Activated T-helper 2 cell treated with anti-CD3 and anti-CD28 coated beads, Interferon-gamma antibody, Interleukin-2, Interleukin-4, amounts not matched to agents 10 μg/mL and 5 μg/mL and 100 μg/mL, durations not matched to agents 14 hours and 24 hours and 36 hours (primary cell): ENCODE measurements at regions of chr17 and their contacts with region 1.

Region 1: DNA sequence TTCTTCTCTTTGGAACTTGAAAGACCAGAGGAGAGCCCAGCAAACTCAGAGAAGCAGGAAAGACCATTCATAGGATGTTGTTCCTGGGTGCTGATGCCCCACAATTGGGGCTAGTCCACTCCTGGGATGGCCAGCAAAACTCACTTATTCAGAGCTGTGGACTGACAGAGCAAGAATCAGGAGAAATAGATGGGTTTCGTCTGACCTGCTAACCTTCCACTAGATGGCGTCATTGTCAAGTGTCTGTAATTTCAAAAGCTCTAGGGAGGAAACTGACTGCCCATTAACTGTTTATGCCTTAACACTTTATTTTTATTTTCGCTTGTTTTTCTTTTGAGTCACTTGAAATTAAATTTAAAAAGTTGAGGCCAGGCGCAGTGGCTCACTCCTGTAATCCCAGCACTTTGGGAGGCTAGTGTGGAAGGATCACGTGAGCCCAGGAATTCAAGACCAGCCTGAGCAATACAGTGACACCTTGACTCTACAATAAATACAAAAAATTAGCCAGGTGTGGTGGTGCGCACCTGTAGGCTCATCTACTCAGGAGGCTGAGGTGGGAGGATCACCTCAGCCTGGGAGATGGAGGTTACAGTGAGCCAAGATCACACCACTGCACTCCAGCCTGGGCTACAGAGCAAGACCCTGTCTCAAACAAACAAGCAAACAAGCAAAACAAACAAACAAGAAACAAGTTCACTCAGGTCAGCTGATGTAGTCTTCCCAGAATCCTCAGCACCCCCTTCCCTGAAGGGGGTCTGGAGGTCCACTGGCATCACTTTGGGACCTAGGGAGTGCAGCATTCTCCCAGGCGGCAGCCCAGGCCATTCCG is 28.6 kb upstream of the MILR1 start:
- DNase-seq: no peak
- H3K4me3 Mint-ChIP-seq: no peak overlapping the region
- H3K27ac Mint-ChIP-seq: no peak overlapping the region
- H3K4me1 Mint-ChIP-seq: peaks cover 2% of the 10 kb centered on the region
- H3K27me3 Mint-ChIP-seq: peaks cover 8% of the 10 kb centered on the region

Region 2: DNA sequence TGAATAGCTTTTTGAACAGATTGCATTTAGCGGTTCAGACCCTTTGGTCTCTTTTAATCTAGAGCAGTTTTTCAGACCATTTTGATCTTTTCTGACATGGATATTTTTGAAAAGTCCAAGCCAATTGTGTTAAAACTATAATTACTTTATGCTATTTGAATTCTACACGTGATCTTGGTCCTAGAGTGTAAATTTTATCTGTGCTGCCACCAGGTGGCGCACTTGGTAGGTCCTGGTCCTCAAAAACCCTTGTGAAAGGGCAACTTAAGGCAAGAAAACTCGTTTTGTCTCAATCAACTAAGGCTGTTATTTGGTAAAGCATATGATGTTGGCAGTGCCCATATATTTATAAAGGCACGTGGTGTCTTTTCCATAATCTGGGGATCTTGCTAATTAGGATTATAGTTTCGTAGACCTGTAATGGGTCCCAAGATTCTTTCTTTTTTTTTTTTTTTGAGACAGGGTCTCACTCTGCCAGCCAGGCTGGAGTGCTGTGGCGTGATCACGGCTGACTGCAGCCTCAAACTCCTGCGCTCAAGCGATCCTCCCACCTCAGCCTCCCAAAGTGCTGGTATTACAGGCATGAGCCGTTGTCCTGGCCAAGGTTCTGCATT is 113.4 kb before region 1 on chr17:
- intact Hi-C with region 1: loop called (anchors 1 kb)
- DNase-seq: peak; percentile 43
- H3K4me3 Mint-ChIP-seq: no peak overlapping the region
- H3K27ac Mint-ChIP-seq: no peak overlapping the region
- H3K4me1 Mint-ChIP-seq: peaks cover 2% of the 10 kb centered on the region
- H3K27me3 Mint-ChIP-seq: no peaks in the 10 kb centered on the region

Region 3: DNA sequence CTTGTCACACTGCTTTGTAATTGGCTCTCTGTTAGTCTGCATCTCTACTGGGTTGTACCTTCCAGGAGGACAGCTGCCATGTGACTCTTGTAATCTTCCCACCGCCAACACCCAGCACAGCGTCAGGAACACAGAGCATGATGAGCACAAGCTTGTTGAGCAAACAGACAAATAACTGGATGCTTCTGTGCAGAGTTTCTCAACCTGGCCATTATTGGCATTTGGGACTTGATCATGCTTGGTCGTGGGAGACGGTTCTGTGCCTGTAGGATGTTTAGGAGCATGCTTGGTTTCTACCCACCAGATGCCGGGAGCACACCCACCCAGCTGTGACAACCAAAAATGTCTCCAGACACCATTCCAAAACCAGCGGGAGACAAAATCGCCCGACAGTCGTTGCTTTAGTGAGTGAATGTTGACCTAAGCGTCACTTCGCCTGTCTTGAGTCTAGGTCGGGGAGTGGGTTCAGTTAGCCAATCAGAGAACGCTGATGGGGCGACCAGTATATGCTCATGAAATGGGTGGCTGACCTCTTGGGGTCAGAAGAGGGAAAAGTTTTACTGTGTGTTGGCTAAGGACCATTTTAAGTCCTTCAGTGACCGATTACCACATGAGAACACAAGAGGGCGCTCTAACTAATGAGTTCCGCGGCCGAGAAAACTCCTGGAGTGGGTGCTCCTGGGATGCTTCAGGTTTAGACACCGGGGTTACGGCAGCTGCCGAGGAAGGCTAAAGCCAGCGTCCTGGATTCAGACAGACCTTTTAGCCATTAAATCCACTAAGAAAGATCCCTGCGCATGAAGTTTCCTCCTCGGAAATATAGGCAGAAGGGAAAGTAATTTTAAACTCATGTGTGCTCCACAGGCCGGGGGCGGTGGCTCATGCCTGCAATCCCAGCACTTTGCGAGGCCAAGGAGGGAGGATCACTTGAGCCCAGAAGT is 99.5 kb before region 1 on chr17:
- intact Hi-C with region 1: loop called (anchors 1 kb)
- DNase-seq: peak; percentile 39
- H3K4me3 Mint-ChIP-seq: peak overlapping the region; percentile 47
- H3K27ac Mint-ChIP-seq: no peak overlapping the region
- H3K4me1 Mint-ChIP-seq: peaks cover 4% of the 10 kb centered on the region
- H3K27me3 Mint-ChIP-seq: peaks cover 8% of the 10 kb centered on the region

Region 4: DNA sequence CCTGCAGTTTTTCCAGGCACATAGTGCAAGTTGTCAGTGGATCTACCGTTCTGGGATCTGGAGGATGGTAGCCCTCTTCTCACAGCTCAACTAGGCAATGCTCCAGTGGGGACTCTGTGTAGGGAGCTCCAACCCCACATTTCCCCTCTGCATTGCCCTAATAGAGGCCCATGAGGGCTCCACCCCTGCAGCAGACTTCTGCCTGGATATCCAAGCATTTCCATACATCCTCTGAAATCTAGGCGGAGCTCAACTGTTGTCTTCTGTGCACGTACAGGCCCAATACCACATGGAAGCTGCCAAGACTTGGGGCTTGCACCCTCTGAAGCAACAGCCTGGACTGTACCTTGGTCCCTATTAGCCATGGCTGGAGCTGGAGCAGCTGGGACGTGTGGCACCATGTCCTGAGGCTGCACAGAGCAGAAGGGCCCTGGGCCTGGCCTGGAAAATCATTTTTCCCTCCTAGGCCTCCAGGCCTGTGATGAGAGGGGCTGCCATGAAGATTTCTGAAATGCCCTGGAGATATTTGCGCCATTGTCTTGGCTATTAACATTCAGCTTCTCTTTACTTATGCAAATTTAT is 17.7 kb after region 1 on chr17:
- intact Hi-C with region 1: no loop called
- DNase-seq: no peak
- H3K4me3 Mint-ChIP-seq: no peak overlapping the region
- H3K27ac Mint-ChIP-seq: no peak overlapping the region
- H3K4me1 Mint-ChIP-seq: peaks cover 16% of the 10 kb centered on the region
- H3K27me3 Mint-ChIP-seq: no peaks in the 10 kb centered on the region

Region 5: GRCh38 chr17:64491034-64491859 is 70.9 kb after region 1 on chr17:
- intact Hi-C with region 1: loop called (anchors 1 kb)
- DNase-seq: peak; percentile 47
- H3K4me3 Mint-ChIP-seq: no peak overlapping the region
- H3K27ac Mint-ChIP-seq: no peak overlapping the region
- H3K4me1 Mint-ChIP-seq: peaks cover 20% of the 10 kb centered on the region
- H3K27me3 Mint-ChIP-seq: no peaks in the 10 kb centered on the region

Region 6: GRCh38 chr17:64635647-64636307 is 215.4 kb after region 1 on chr17:
- intact Hi-C with region 1: no loop called
- DNase-seq: no peak
- H3K4me3 Mint-ChIP-seq: no peak overlapping the region
- H3K27ac Mint-ChIP-seq: peak overlapping the region; percentile 96
- H3K4me1 Mint-ChIP-seq: peaks cover 40% of the 10 kb centered on the region
- H3K27me3 Mint-ChIP-seq: no peaks in the 10 kb centered on the region

Region 7: DNA sequence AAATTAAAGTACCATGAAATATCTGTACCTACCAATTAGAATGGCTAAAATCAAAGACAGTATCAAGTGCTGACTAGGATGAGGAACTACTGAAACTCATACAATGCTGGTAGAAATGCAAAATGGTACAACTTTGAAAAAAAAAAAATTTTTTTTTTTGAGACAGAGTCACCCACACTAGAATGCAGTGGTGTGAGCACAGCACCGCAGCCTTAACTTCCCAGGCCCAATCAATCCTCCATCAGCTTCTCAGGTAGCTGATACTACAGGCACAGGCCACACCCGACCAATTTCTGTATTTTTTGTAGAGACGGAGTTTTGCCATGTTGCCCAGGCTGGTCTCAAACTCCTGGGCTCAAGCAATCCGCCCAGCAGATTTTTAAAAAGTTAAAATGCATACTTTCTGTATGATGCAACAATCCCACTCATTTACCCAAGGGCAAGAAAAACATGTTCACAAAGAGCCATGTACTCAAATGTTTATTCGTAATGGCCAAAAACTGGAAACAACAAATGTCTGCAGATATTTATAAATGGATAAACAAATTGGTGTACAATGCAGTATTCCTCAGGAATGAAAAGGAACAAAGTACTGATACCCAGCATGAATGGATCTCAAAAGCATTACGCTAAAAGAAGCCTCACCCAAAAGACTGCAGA is 233.1 kb after region 1 on chr17:
- intact Hi-C with region 1: loop called (anchors 1 kb)
- DNase-seq: no peak
- H3K4me3 Mint-ChIP-seq: no peak overlapping the region
- H3K27ac Mint-ChIP-seq: no peak overlapping the region
- H3K4me1 Mint-ChIP-seq: peaks cover 15% of the 10 kb centered on the region
- H3K27me3 Mint-ChIP-seq: no peaks in the 10 kb centered on the region

Region 8: DNA sequence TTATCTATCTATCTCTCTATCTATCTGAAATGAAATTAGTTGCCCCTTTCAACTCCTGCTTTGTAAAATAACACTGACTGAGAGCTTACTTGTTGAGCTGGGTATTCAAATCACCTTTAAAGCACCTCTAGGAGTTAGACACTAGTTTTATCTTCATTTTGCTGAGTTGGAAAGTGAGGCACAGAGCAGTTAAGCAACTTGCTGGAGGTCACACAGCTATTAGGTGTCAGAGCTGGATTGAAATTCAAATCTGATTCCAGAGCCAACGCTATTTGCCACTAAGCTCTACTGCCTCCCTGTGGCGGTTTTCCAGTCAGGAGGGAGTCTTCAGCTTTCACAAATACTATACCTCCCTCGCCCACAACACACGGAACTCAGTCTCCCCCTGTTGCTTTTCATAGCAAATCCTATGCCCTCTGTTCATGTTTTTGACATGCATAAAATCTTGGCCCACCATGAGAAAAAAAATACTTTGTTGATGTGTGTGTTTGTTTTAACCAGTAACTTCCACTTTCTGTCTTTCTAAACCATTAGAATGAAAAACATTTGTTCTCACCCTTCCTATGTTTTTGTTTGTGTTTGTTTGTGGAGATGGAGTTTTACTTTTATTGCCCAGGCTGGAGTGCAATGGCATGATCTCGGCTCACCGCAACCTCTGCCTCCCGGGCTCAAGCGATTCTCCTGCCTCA is 316.6 kb after region 1 on chr17:
- intact Hi-C with region 1: loop called (anchors 10 kb)
- DNase-seq: peak; percentile 50
- H3K4me3 Mint-ChIP-seq: no peak overlapping the region
- H3K27ac Mint-ChIP-seq: no peak overlapping the region
- H3K4me1 Mint-ChIP-seq: peaks cover 12% of the 10 kb centered on the region
- H3K27me3 Mint-ChIP-seq: no peaks in the 10 kb centered on the region